BJ (cell line): ENCODE measurements at regions of chr12 and their contacts with region 1.

Region 1: DNA sequence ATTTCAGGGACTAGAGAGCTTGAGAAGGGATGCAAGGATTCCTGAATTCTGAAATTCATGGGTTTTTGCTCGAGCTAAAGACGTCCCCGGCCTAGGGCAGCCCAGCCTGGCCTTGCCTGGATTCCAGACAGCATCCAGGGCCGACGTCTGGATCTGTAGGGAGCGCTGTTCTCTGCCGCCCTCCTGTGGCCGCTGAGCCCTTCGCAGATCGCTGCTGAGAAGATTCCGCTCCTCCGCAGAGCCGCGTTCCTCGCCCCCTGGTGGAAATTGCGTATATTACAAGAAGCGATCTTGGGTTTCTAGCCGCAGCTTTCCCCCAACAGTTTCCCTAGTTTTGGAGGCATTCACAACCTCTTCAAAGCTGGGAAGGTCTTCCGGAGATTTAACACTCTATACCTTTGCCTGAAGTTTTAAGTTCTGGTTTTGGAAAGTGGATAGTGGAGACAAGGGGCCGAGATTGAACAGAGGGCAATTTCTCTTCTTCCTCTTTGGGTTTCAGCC is 5.1 kb downstream of the CISTR start:
- DNase-seq: peak; percentile 50
- H3K4me3 ChIP-seq: no peak overlapping the region
- H3K27me3 ChIP-seq: peaks cover 57% of the 10 kb centered on the region
- CTCF ChIP-seq: peak; percentile 100

Region 2: GRCh38 chr12:53518381-53518780 is 228.3 kb before region 1 on chr12:
- CTCF ChIA-PET with region 1: interaction called, 3 read pairs
- POLR2A ChIA-PET with region 1: interaction called, 11 read pairs
- DNase-seq: no peak
- H3K4me3 ChIP-seq: no peak overlapping the region
- H3K27me3 ChIP-seq: no peaks in the 10 kb centered on the region
- CTCF ChIP-seq: no peak

Region 3: DNA sequence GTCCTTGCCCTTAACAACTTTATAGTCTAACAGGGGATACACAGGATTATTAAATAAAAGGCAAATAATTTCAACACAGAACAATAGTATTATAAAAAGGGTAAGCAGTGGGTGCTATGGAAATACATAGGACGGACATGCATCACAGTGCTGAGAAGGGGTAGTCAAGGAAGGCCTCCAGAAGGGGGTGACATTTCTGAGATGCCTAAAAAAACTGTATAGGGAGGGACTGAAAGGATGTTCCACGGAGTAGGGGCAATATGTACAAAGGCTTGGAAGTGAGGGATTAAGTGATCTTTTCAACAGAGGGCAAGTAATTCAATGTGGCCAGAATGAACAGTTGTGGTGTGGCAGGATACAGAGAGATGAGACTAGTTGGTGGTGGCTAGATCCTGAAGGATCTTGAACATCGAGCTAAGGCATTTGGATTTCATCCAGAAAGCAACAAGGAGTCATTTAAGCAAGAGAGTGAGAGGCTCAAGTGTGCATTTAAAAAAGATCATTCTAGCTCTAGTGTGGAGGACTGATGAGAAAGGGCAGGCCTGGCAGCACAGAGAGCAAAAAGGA is 61.9 kb before region 1 on chr12:
- CTCF ChIA-PET with region 1: interaction called, 324 read pairs
- POLR2A ChIA-PET with region 1: no interaction called
- DNase-seq: no peak
- H3K4me3 ChIP-seq: no peak overlapping the region
- H3K27me3 ChIP-seq: no peaks in the 10 kb centered on the region
- CTCF ChIP-seq: no peak

Region 4: DNA sequence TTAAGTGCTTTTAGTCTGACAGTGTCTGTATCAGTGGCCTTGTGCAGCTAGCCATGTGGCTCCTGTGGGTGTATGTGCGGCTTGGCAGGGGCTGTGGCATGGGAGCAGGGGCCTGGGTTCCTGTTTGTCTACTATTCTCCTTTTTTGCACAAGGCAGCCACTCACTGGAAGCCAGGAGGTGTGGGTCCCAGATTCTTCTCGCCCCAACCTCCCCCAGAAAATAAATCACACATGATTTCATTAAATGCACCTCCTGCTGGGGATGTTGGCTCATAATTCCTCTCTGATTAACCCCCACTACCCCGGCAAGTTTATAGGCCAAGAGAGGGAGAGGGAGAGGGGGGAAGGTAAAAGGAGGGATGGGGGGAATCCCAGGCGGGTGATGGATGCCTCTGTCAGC is 37.0 kb before region 1 on chr12:
- CTCF ChIA-PET with region 1: interaction called, 240 read pairs
- POLR2A ChIA-PET with region 1: no interaction called
- DNase-seq: no peak
- H3K4me3 ChIP-seq: no peak overlapping the region
- H3K27me3 ChIP-seq: peaks cover 7% of the 10 kb centered on the region
- CTCF ChIP-seq: no peak

Region 5: DNA sequence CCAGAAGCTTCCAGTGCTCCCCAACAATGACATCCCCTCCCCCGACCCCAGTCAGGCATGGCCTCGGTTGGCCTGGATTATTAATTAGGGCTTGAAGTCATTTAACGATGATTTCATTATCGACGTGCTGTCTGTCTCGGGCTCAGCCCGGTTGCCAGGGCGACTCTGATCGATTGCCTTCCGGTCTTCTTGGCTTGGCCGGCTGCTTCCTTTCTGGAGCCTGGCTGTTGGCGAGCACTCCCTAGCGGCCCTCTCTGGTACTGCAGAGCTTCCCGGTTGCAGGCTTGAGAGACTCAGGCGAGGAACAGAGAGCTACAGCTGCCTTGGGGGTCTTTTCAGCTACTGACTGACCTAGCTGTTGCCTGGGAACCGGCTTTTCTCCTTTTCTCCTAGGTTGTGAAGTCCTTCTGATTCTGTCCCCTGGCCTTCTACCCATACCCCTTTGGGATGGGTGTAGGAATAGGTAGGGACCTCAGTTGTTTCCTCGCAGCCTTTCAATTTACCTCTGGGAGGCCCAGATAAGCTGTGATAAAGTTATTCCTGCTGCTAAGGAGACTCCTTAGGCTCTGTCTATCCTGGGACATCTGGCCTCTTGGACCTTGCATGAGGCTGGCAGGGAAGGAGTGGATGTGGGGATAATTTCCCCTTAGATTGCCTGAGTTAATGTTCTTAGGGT is 10.6 kb after region 1 on chr12:
- CTCF ChIA-PET with region 1: interaction called, 124 read pairs
- POLR2A ChIA-PET with region 1: no interaction called
- DNase-seq: no peak
- H3K4me3 ChIP-seq: no peak overlapping the region
- H3K27me3 ChIP-seq: peaks cover 47% of the 10 kb centered on the region
- CTCF ChIP-seq: peak; percentile 88

Region 6: DNA sequence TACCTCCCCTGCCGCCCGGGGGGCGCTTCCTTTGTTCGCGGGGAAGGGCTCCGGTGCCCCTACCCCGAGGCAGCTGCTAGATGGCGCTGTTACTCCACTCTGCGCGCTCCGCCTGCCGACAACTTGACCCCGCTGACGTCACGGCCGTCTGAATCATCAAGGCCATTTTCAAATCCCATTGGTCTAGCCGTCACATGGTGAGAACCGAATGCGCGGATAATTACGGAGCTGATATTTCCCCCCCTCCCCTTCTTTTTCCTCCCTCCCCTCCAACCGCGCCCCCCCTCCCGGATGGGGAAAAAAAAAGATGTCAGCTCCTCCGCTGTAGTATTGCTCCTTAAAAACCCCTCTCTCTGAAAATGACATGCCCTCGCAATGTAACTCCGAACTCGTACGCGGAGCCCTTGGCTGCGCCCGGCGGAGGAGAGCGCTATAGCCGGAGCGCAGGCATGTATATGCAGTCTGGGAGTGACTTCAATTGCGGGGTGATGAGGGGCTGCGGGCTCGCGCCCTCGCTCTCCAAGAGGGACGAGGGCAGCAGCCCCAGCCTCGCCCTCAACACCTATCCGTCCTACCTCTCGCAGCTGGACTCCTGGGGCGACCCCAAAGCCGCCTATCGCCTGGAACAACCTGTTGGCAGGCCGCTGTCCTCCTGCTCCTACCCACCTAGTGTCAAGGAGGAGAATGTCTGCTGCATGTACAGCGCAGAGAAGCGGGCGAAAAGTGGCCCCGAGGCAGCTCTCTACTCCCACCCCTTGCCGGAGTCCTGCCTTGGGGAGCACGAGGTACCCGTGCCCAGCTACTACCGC is 238.5 kb after region 1 on chr12 and contains the start of gene HOXC10:
- CTCF ChIA-PET with region 1: interaction called, 11 read pairs
- POLR2A ChIA-PET with region 1: no interaction called
- DNase-seq: no peak
- H3K4me3 ChIP-seq: peak within 1 kb of the TSS; percentile 60
- H3K27me3 ChIP-seq: peaks cover 2% of the 10 kb centered on the region; the same call in 1 of the 2 replicates
- CTCF ChIP-seq: peak; percentile 83
- polyA plus RNA-seq, gene HOXC10: 13.9 and 14.9 TPM in 2 replicates